ENCODE measurements at regions of chr1 and their contacts with region 1.

Region 1: DNA sequence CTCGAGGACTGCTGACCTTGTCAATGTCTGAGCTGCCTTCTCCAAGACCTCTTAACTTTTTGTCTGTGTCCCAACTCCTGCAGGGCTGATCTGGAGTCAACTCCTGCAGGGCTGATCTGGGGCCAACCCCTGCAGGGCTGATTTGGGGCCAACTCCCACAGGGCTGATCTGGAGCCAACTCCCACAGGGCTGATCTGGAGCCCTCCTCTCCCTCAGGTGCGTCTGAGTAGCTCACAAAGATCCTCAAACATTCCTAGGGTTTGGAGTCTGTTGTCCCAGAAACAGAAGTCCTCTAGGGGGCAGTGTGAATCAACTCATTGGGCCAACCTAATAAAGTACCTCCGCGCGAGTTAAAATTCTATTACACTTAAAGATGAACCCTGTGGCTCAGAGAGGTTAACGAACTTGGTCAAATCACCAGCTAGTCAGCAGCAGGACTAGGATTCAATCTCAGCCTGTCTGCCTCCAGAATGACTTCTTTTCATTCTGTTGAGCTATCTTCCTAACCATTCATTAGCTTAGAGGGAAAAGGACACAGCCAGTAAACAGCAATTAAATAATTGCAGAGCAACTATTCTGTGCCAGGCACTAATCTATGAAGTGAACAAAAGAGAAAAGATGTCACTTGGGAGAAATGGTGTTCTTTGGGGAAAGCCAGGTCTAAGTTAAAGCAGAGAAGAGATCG is 17.2 kb upstream of the RLF start:
- DNase-seq: peak in 1 of 2 donors; percentile 35
- H3K4me3 ChIP-seq: no peak overlapping the region
- H3K27ac ChIP-seq: no peak overlapping the region
- H3K4me1 ChIP-seq: no peaks in the 10 kb centered on the region
- H3K27me3 ChIP-seq: peaks cover 0 to 12% of the 10 kb centered on the region in 2 donors
- CTCF ChIP-seq: peak; percentile 72 to 73

Region 2: GRCh38 chr1:40197656-40198055 is 53.6 kb after region 1 on chr1:
- intact Hi-C with region 1: no loop called
- DNase-seq: no peak
- H3K4me3 ChIP-seq: no peak overlapping the region
- H3K27ac ChIP-seq: no peak overlapping the region
- H3K4me1 ChIP-seq: peaks cover 0 to 2% (median 0%) of the 10 kb centered on the region in 4 donors
- H3K27me3 ChIP-seq: no peaks in the 10 kb centered on the region
- CTCF ChIP-seq: no peak

Region 3: GRCh38 chr1:40344597-40344996 is 200.6 kb after region 1 on chr1:
- intact Hi-C with region 1: loop called (anchors 5 kb)
- DNase-seq: peak; percentile 74 to 75
- H3K4me3 ChIP-seq: no peak overlapping the region
- H3K27ac ChIP-seq: no peak overlapping the region
- H3K4me1 ChIP-seq: peaks cover 0 to 5% (median 0%) of the 10 kb centered on the region in 4 donors
- H3K27me3 ChIP-seq: no peaks in the 10 kb centered on the region
- CTCF ChIP-seq: no peak